Psoas muscle (tissue), 8 donors: ENCODE measurements at regions of chr18 and their contacts with region 1.

Region 1: DNA sequence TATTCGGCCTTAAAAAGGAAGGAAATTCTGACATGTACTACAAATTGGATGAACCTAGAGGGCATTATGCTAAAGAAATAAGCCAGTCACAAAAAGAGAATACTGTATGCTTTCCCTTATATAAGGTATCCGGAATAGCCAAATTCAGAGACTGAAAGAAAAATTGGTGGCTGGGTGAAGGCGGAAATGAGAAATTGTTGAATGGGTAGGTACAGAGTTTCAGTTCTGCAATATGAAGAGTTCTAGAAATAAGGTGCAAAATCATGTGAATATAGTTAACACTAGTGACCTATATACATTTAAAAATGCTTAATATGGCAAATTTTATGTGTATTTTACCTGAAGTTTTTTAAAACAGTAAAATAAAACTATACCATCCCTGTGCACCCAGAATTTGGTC is 43.1 kb downstream of the RMP24 start:
- DNase-seq: no peak
- ATAC-seq: no peak
- H3K4me3 ChIP-seq: no peak overlapping the region
- H3K27ac ChIP-seq: no peak overlapping the region
- H3K4me1 ChIP-seq: no peaks in the 10 kb centered on the region
- H3K27me3 ChIP-seq: no peaks in the 10 kb centered on the region
- CTCF ChIP-seq: no peak

Region 2: GRCh38 chr18:36067055-36067957 is 51.7 kb after region 1 on chr18 and contains the start of gene RPRD1A:
- intact Hi-C with region 1: no loop called
- DNase-seq: peak; percentile 98
- ATAC-seq: peak; percentile 97 to 99 (median 98)
- H3K4me3 ChIP-seq: peak within 1 kb of the TSS; percentile 88
- H3K27ac ChIP-seq: peak within 1 kb of the TSS; percentile 95
- H3K4me1 ChIP-seq: peaks cover 14% of the 10 kb centered on the region
- H3K27me3 ChIP-seq: no peaks in the 10 kb centered on the region
- CTCF ChIP-seq: no peak
- total RNA-seq, gene RPRD1A: 41.5 to 59.0 (median 50.3) TPM

Region 3: GRCh38 chr18:36078751-36079529 is 63.3 kb after region 1 on chr18:
- intact Hi-C with region 1: no loop called
- DNase-seq: no peak
- ATAC-seq: no peak
- H3K4me3 ChIP-seq: no peak overlapping the region
- H3K27ac ChIP-seq: no peak overlapping the region
- H3K4me1 ChIP-seq: no peaks in the 10 kb centered on the region
- H3K27me3 ChIP-seq: no peaks in the 10 kb centered on the region
- CTCF ChIP-seq: no peak

Region 4: GRCh38 chr18:36129300-36130038 is 113.8 kb after region 1 on chr18 and contains the starts of genes ELP2 and SLC39A6:
- intact Hi-C with region 1: loop called (anchors 5 kb)
- DNase-seq: peak; percentile 96 to 98
- ATAC-seq: peak; percentile 97 to 98 (median 98)
- H3K4me3 ChIP-seq: peak within 1 kb of the TSS; percentile 87
- H3K27ac ChIP-seq: peak within 1 kb of the TSS; percentile 99
- H3K4me1 ChIP-seq: peaks cover 24% of the 10 kb centered on the region
- H3K27me3 ChIP-seq: no peaks in the 10 kb centered on the region
- CTCF ChIP-seq: peak; percentile 4
- total RNA-seq, gene ELP2: 54.7 to 65.5 (median 57.4) TPM
- total RNA-seq, gene SLC39A6: 10.0 to 21.3 (median 13.5) TPM

Region 5: GRCh38 chr18:36186911-36187834 is 171.5 kb after region 1 on chr18 and contains the start of gene MOCOS:
- intact Hi-C with region 1: loop called in 1 of 2 experiments (anchors 10 kb)
- DNase-seq: peak; percentile 80 to 84
- ATAC-seq: peak; percentile 83 to 85 (median 84)
- H3K4me3 ChIP-seq: peak within 1 kb of the TSS; percentile 92
- H3K27ac ChIP-seq: peak within 1 kb of the TSS; percentile 36
- H3K4me1 ChIP-seq: peaks cover 3% of the 10 kb centered on the region
- H3K27me3 ChIP-seq: peaks cover 0 to 9% (median 0%) of the 10 kb centered on the region in 3 donors
- CTCF ChIP-seq: no peak
- total RNA-seq, gene MOCOS: 0.30 to 4.8 (median 1.9) TPM

Region 6: GRCh38 chr18:36284671-36285295 is 269.2 kb after region 1 on chr18:
- intact Hi-C with region 1: loop called (anchors 2 to 5 kb)
- DNase-seq: no peak
- ATAC-seq: peak; percentile 61 to 77 (median 67)
- H3K4me3 ChIP-seq: no peak overlapping the region
- H3K27ac ChIP-seq: no peak overlapping the region
- H3K4me1 ChIP-seq: no peaks in the 10 kb centered on the region
- H3K27me3 ChIP-seq: peaks cover 0 to 2% (median 0%) of the 10 kb centered on the region in 3 donors
- CTCF ChIP-seq: peak; percentile 93